PC-9 (cell line): ENCODE measurements at regions of chr12 and their contacts with region 1.

Region 1: GRCh38 chr12:116673681-116674111 is 64.2 kb downstream of the SPRING1 start:
- DNase-seq: no peak
- H3K4me3 ChIP-seq: no peak overlapping the region
- H3K27ac ChIP-seq: no peak overlapping the region
- H3K4me1 ChIP-seq: no peaks in the 10 kb centered on the region
- H3K27me3 ChIP-seq: no peaks in the 10 kb centered on the region
- CTCF ChIP-seq: no peak; the same call in 1 of the 2 replicates

Region 2: GRCh38 chr12:116533343-116534251 is 140.1 kb before region 1 on chr12:
- CTCF ChIA-PET with region 1: no interaction called
- POLR2A ChIA-PET with region 1: interaction called, 62 read pairs
- intact Hi-C with region 1: no loop called
- DNase-seq: peak; percentile 51 to 76
- H3K4me3 ChIP-seq: peak overlapping the region; percentile 57
- H3K27ac ChIP-seq: no peak overlapping the region
- H3K4me1 ChIP-seq: peaks cover 18% of the 10 kb centered on the region
- H3K27me3 ChIP-seq: no peaks in the 10 kb centered on the region
- CTCF ChIP-seq: no peak